ENCODE measurements at regions of chr6 and their contacts with region 1.

Region 1: GRCh38 chr6:37791156-37791919 is 28.2 kb upstream of the ZFAND3 start:
- DNase-seq: peak; percentile 96
- H3K4me3 ChIP-seq: no peak overlapping the region
- H3K4me3 Mint-ChIP-seq: no peak overlapping the region
- H3K27ac Mint-ChIP-seq: peak overlapping the region; percentile 90
- H3K4me1 ChIP-seq: peaks cover 11% of the 10 kb centered on the region
- H3K4me1 Mint-ChIP-seq: peaks cover 11% of the 10 kb centered on the region
- H3K27me3 ChIP-seq: no peaks in the 10 kb centered on the region
- H3K27me3 Mint-ChIP-seq: no peaks in the 10 kb centered on the region
- CTCF ChIP-seq: peak; percentile 90 to 93

Region 2: GRCh38 chr6:37643851-37644672 is 147.3 kb before region 1 on chr6:
- CTCF ChIA-PET with region 1: no interaction called
- POLR2A ChIA-PET with region 1: no interaction called
- intact Hi-C with region 1: no loop called
- DNase-seq: peak in 1 of 2 experiments; percentile 16
- H3K4me3 ChIP-seq: no peak overlapping the region
- H3K4me3 Mint-ChIP-seq: no peak overlapping the region
- H3K27ac Mint-ChIP-seq: no peak overlapping the region
- H3K4me1 ChIP-seq: no peaks in the 10 kb centered on the region
- H3K4me1 Mint-ChIP-seq: no peaks in the 10 kb centered on the region
- H3K27me3 ChIP-seq: no peaks in the 10 kb centered on the region
- H3K27me3 Mint-ChIP-seq: peaks cover 4% of the 10 kb centered on the region
- CTCF ChIP-seq: no peak

Region 3: GRCh38 chr6:37761554-37762263 is 29.6 kb before region 1 on chr6:
- CTCF ChIA-PET with region 1: interaction called, 9 read pairs
- POLR2A ChIA-PET with region 1: no interaction called
- intact Hi-C with region 1: loop called (anchors 1 kb)
- DNase-seq: peak; percentile 52 to 59
- H3K4me3 ChIP-seq: no peak overlapping the region
- H3K4me3 Mint-ChIP-seq: no peak overlapping the region
- H3K27ac Mint-ChIP-seq: no peak overlapping the region
- H3K4me1 ChIP-seq: peaks cover 28% of the 10 kb centered on the region
- H3K4me1 Mint-ChIP-seq: peaks cover 19% of the 10 kb centered on the region
- H3K27me3 ChIP-seq: no peaks in the 10 kb centered on the region
- H3K27me3 Mint-ChIP-seq: no peaks in the 10 kb centered on the region
- CTCF ChIP-seq: no peak

Region 4: DNA sequence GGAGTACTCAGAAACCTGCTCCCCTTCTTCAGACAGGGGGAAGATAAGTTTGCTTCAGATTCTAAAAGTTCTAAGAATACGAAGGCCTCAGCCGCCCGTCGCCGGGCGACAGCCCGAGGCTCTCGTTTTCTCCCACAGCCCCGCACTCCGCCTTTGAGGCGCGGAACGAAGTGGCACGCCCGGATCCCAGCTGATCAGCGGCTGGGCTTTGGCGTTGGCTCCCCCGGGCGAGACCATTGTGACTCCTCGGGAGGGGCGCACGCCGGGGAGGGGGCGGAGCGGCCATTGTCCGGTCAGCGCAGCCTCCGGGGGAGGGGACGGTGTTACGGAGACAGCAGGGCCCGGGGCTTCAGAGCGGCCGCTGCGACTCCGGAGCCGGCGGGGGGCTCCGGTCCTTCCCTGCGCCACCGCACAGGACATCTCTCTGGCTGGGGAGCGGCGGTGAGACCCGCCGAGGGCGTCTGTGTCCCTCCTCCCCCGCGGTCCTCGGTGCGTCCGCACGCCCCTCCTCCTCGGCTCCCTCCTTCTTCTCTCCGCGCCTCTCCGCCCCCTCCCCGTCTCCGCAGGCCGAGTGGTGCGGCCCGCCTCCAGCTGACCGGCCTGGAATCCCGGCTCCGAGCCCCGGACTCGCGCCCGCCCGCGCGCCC is 28.0 kb after region 1 on chr6 and contains the start of gene ZFAND3:
- CTCF ChIA-PET with region 1: interaction called, 21 read pairs
- POLR2A ChIA-PET with region 1: interaction called, 15 read pairs
- intact Hi-C with region 1: loop called (anchors 1 kb)
- DNase-seq: peak; percentile 96 to 98
- H3K4me3 ChIP-seq: peak within 1 kb of the TSS; percentile 74
- H3K4me3 Mint-ChIP-seq: peak within 1 kb of the TSS; percentile 99
- H3K27ac Mint-ChIP-seq: peak within 1 kb of the TSS; percentile 99
- H3K4me1 ChIP-seq: peaks cover 41% of the 10 kb centered on the region
- H3K4me1 Mint-ChIP-seq: peaks cover 29% of the 10 kb centered on the region
- H3K27me3 ChIP-seq: no peaks in the 10 kb centered on the region
- H3K27me3 Mint-ChIP-seq: no peaks in the 10 kb centered on the region
- CTCF ChIP-seq: no peak
- total RNA-seq, gene ZFAND3: 91.1 and 107 TPM in 2 replicates

Region 5: GRCh38 chr6:37860226-37860839 is 69.0 kb after region 1 on chr6:
- CTCF ChIA-PET with region 1: interaction called, 14 read pairs
- POLR2A ChIA-PET with region 1: interaction called, 3 read pairs
- intact Hi-C with region 1: loop called (anchors 1 kb)
- DNase-seq: peak in 1 of 2 experiments; percentile 55
- H3K4me3 ChIP-seq: no peak overlapping the region
- H3K4me3 Mint-ChIP-seq: no peak overlapping the region
- H3K27ac Mint-ChIP-seq: no peak overlapping the region
- H3K4me1 ChIP-seq: no peaks in the 10 kb centered on the region; the same call in 1 of the 2 replicates
- H3K4me1 Mint-ChIP-seq: peaks cover 2% of the 10 kb centered on the region
- H3K27me3 ChIP-seq: no peaks in the 10 kb centered on the region
- H3K27me3 Mint-ChIP-seq: no peaks in the 10 kb centered on the region
- CTCF ChIP-seq: peak; percentile 49 to 54

Region 6: GRCh38 chr6:37878150-37878713 is 86.9 kb after region 1 on chr6:
- CTCF ChIA-PET with region 1: interaction called, 11 read pairs
- POLR2A ChIA-PET with region 1: no interaction called
- intact Hi-C with region 1: no loop called
- DNase-seq: no peak
- H3K4me3 ChIP-seq: no peak overlapping the region
- H3K4me3 Mint-ChIP-seq: no peak overlapping the region
- H3K27ac Mint-ChIP-seq: no peak overlapping the region
- H3K4me1 ChIP-seq: peaks cover 17% of the 10 kb centered on the region
- H3K4me1 Mint-ChIP-seq: peaks cover 32% of the 10 kb centered on the region
- H3K27me3 ChIP-seq: no peaks in the 10 kb centered on the region
- H3K27me3 Mint-ChIP-seq: no peaks in the 10 kb centered on the region
- CTCF ChIP-seq: no peak

Region 7: DNA sequence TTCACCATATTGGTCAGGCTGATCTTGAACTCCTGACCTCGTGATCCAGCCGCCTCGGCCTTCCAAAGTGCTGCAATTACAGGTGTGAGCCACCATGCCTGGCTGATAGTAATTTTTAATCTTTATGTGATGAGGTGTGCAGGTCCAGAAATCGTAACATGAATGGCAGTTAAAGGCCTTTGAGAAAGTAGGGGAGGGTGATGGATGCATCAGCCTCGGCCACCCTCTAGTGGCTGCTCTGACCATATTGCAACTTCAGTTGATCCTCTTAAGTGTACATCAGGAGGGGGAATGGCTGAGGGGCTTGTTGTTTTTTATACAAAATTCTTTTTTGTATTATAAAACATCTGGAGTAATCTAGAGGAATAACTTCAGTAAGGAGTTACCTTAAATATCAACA is 221.2 kb after region 1 on chr6:
- CTCF ChIA-PET with region 1: interaction called, 6 read pairs
- POLR2A ChIA-PET with region 1: no interaction called
- intact Hi-C with region 1: loop called (anchors 2 kb)
- DNase-seq: peak; percentile 31 to 35
- H3K4me3 ChIP-seq: no peak overlapping the region
- H3K4me3 Mint-ChIP-seq: no peak overlapping the region
- H3K27ac Mint-ChIP-seq: no peak overlapping the region
- H3K4me1 ChIP-seq: no peaks in the 10 kb centered on the region; the same call in 1 of the 2 replicates
- H3K4me1 Mint-ChIP-seq: no peaks in the 10 kb centered on the region
- H3K27me3 ChIP-seq: no peaks in the 10 kb centered on the region
- H3K27me3 Mint-ChIP-seq: no peaks in the 10 kb centered on the region
- CTCF ChIP-seq: peak; percentile 61 to 79

Region 8: DNA sequence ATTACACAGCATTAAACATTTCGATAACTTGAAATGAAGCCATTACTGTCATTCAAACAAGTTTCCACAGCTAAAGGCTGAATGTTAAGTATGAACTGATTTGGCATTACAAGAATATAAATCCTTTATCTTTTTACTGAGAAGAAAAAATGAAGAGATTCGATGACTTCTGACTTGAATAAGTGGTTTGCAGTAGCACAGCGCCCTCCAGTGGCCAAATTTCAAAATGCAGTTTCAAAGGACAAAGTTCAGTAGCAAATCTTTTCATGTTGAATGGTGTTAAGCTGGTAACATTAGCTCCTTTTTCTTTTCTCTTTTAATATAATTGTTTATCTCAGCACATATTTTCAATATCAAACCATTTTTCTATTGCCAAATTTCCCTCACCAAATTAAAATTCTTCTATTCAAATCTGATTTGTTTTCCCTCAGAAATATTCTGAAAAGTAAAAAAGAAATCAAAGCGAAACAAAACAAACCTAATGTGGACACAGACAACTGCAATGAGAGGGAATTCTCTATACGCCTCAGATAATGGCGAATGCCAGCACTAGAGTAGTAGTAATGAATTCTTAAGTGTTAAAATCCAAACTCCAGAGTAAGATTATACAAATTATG is 702.7 kb after region 1 on chr6:
- CTCF ChIA-PET with region 1: interaction called, 5 read pairs
- POLR2A ChIA-PET with region 1: no interaction called
- intact Hi-C with region 1: loop called (anchors 1 kb)
- DNase-seq: peak; percentile 62 to 73
- H3K4me3 ChIP-seq: no peak overlapping the region
- H3K4me3 Mint-ChIP-seq: no peak overlapping the region
- H3K27ac Mint-ChIP-seq: no peak overlapping the region
- H3K4me1 ChIP-seq: no peaks in the 10 kb centered on the region
- H3K4me1 Mint-ChIP-seq: no peaks in the 10 kb centered on the region
- H3K27me3 ChIP-seq: no peaks in the 10 kb centered on the region
- H3K27me3 Mint-ChIP-seq: no peaks in the 10 kb centered on the region
- CTCF ChIP-seq: peak; percentile 74 to 80

Measured in Caco-2 (cell line).